ENCODE measurements at regions of chr5 and their contacts with region 1.

Region 1: GRCh38 chr5:174189654-174190541 is 144.4 kb downstream of the NSG2 start:
- DNase-seq: no peak
- H3K4me3 ChIP-seq: no peak overlapping the region
- H3K27ac ChIP-seq: no peak overlapping the region
- H3K27me3 ChIP-seq: no peaks in the 10 kb centered on the region
- CTCF ChIP-seq: no peak

Region 2: GRCh38 chr5:173855162-173855994 is 334.5 kb before region 1 on chr5:
- CTCF ChIA-PET with region 1: interaction called, 10 read pairs
- POLR2A ChIA-PET with region 1: no interaction called
- DNase-seq: no peak
- H3K4me3 ChIP-seq: no peak overlapping the region
- H3K27ac ChIP-seq: no peak overlapping the region
- H3K27me3 ChIP-seq: no peaks in the 10 kb centered on the region
- CTCF ChIP-seq: no peak

Region 3: DNA sequence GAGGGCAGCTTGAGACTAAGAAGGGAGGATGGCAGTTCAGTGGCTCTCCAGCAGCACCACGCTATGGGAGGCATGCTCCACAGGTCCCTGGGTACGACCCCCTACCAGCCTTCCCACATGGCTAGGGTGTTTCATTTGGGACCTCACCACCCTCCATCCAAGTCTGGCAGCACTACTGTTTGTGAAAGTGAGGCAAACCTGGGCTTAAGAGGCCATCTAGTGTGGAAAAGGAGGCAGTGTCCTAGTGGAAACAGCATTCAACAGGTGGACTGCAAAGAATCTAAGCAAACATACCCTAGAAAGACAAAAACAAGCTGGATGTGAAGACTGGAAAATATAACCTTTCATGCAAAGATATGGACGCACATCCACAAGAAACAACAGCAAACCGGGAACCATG is 205.7 kb before region 1 on chr5:
- CTCF ChIA-PET with region 1: no interaction called
- POLR2A ChIA-PET with region 1: no interaction called
- DNase-seq: no peak
- H3K4me3 ChIP-seq: no peak overlapping the region
- H3K27ac ChIP-seq: no peak overlapping the region
- H3K27me3 ChIP-seq: peaks cover 15% of the 10 kb centered on the region
- CTCF ChIP-seq: peak; percentile 51

Region 4: DNA sequence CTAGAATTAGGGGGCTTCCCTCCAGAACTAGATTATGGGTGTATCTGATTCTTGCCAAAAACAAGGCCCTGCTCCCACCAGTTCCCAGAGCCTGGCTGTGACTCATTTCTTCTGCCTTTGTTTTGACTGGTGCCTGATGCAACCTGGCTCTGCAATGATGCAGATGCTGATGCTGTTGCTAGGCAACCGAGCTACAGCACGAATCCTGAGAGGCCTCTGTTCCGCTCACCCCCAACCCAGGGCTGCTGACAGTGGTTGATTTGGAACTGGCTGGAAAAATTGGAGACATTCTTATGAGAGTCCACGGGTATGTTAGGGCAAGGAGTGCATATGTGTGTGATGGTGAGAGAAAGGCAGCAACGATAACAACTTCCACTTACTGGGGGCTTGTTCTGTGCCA is 44.1 kb before region 1 on chr5:
- CTCF ChIA-PET with region 1: no interaction called
- POLR2A ChIA-PET with region 1: no interaction called
- DNase-seq: no peak
- H3K4me3 ChIP-seq: no peak overlapping the region
- H3K27ac ChIP-seq: no peak overlapping the region
- H3K27me3 ChIP-seq: no peaks in the 10 kb centered on the region
- CTCF ChIP-seq: no peak

Region 5: DNA sequence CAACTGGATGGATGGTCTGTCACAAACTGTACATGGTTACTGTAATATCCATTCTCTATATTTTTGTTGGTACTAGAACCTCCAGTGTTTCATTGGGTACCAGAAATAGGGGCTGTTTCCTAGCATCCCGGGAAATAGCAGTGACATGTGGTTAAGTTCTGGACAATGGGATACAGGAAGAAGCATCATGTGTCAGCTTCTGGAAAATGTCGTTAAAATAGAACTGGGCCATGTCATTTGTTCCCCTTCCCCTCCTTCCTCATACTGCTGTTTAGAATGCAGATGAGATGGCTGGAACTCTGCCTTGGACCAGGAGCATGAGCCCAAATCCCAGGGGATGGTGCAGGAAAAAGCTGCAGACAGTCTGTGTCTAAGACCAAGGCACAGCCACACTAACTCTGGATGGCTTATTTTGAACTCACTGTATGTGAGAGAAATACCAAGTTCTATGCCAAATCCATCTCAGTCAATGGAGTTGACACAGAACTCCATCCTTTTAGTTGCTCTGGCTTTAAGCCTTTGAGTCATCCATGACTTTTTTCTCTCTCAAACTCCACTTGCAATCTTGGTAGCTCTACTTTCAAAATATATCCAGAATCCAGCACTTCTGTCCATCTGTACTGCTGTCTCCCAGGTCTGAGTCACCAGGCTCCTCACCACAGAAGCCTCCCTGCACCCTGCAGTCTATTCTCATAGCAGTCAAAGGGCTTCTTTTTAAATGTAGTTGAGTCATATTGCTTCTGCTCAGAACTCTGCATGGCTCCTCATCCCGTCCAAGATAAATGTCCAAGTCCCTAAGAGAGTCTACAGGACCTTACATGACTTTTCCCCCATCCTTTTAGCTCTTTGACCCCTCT is 39.8 kb after region 1 on chr5:
- CTCF ChIA-PET with region 1: no interaction called
- POLR2A ChIA-PET with region 1: no interaction called
- DNase-seq: peak; percentile 38
- H3K4me3 ChIP-seq: no peak overlapping the region
- H3K27ac ChIP-seq: no peak overlapping the region
- H3K27me3 ChIP-seq: no peaks in the 10 kb centered on the region
- CTCF ChIP-seq: no peak

Measured in AG04450 (cell line).